ENCODE measurements at regions of chr3 and their contacts with region 1.

Region 1: DNA sequence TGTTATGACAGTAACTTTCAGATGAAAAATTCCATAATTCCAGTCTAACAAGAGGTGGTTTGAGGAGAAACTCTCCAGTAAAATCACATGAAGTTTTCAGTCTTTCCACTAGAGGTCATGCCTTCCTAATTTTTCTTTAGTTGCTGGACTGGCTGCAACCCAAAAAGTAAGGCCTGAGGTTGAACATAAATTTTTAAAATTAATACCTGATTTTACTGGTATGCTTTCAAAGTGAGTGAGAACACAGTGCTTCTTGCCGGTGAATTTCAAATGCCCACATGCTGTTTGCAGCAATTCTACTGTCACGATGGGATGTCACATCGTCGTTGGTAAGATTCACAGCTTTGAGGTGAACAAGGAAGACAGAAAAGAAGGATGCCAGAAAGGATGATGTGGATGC is 89.0 kb upstream of the FGF12 start:
- DNase-seq: peak; percentile 17 to 50 (median 30)
- ATAC-seq: peak; percentile 64
- H3K4me3 ChIP-seq: no peak overlapping the region
- H3K27ac ChIP-seq: no peak overlapping the region
- H3K4me1 ChIP-seq: no peaks in the 10 kb centered on the region
- H3K27me3 ChIP-seq: no peaks in the 10 kb centered on the region
- CTCF ChIP-seq: peak in 6 of 7 experiments; percentile 40 to 84 (median 74)
- POLR2A ChIP-seq: no peak

Region 2: GRCh38 chr3:193039058-193039457 is 222.7 kb after region 1 on chr3:
- intact Hi-C with region 1: loop called (anchors 5 kb)
- DNase-seq: no peak
- ATAC-seq: no peak
- H3K4me3 ChIP-seq: no peak overlapping the region
- H3K27ac ChIP-seq: no peak overlapping the region
- H3K4me1 ChIP-seq: no peaks in the 10 kb centered on the region
- H3K27me3 ChIP-seq: no peaks in the 10 kb centered on the region
- CTCF ChIP-seq: no peak
- POLR2A ChIP-seq: no peak

Region 3: GRCh38 chr3:193572426-193572908 is 756.1 kb after region 1 on chr3:
- intact Hi-C with region 1: loop called (anchors 10 kb)
- DNase-seq: peak; percentile 65 to 74 (median 70)
- ATAC-seq: peak; percentile 81
- H3K4me3 ChIP-seq: no peak overlapping the region
- H3K27ac ChIP-seq: no peak overlapping the region
- H3K4me1 ChIP-seq: no peaks in the 10 kb centered on the region
- H3K27me3 ChIP-seq: no peaks in the 10 kb centered on the region
- CTCF ChIP-seq: peak; percentile 59 to 85 (median 79)
- POLR2A ChIP-seq: no peak